ENCODE measurements at regions of chr1 and their contacts with region 1.

Region 1: GRCh38 chr1:235984041-235984825 is 80.7 kb downstream of the NID1 start:
- DNase-seq: no peak
- H3K4me3 ChIP-seq: no peak overlapping the region
- H3K27ac ChIP-seq: peak overlapping the region; percentile 70
- H3K4me1 ChIP-seq: peaks cover 65% of the 10 kb centered on the region
- H3K27me3 ChIP-seq: no peaks in the 10 kb centered on the region
- CTCF ChIP-seq: no peak

Region 2: GRCh38 chr1:236039740-236040685 is 55.8 kb after region 1 on chr1:
- intact Hi-C with region 1: loop called (anchors 10 kb)
- DNase-seq: peak; percentile 49
- H3K4me3 ChIP-seq: no peak overlapping the region
- H3K27ac ChIP-seq: peak overlapping the region; percentile 78
- H3K4me1 ChIP-seq: peaks cover 47% of the 10 kb centered on the region
- H3K27me3 ChIP-seq: no peaks in the 10 kb centered on the region
- CTCF ChIP-seq: no peak